Sigmoid colon (tissue), 7 donors: ENCODE measurements at regions of chr19 and their contacts with region 1.

Region 1: GRCh38 chr19:48812094-48812929 is 1.5 kb upstream of the BCAT2 start:
- DNase-seq: peak; percentile 98
- H3K4me3 ChIP-seq: peak overlapping the region; percentile 57 to 64 (median 60)
- H3K27ac ChIP-seq: peak overlapping the region; percentile 89 to 96 (median 90)
- H3K4me1 ChIP-seq: peaks cover 0 to 23% (median 21%) of the 10 kb centered on the region in 4 donors
- H3K27me3 ChIP-seq: no peaks in the 10 kb centered on the region
- CTCF ChIP-seq: no peak
- EP300 ChIP-seq: peak in 3 of 4 donors; percentile 33 to 80 (median 55)
- POLR2A ChIP-seq: peak; percentile 69 to 79

Region 2: GRCh38 chr19:48608798-48609263 is 203.5 kb before region 1 on chr19:
- intact Hi-C with region 1: no loop called
- DNase-seq: no peak
- H3K4me3 ChIP-seq: no peak overlapping the region
- H3K27ac ChIP-seq: no peak overlapping the region
- H3K4me1 ChIP-seq: no peaks in the 10 kb centered on the region
- H3K27me3 ChIP-seq: no peaks in the 10 kb centered on the region
- CTCF ChIP-seq: peak in 2 of 4 experiments; percentile 17 to 39
- EP300 ChIP-seq: no peak
- POLR2A ChIP-seq: no peak

Region 3: DNA sequence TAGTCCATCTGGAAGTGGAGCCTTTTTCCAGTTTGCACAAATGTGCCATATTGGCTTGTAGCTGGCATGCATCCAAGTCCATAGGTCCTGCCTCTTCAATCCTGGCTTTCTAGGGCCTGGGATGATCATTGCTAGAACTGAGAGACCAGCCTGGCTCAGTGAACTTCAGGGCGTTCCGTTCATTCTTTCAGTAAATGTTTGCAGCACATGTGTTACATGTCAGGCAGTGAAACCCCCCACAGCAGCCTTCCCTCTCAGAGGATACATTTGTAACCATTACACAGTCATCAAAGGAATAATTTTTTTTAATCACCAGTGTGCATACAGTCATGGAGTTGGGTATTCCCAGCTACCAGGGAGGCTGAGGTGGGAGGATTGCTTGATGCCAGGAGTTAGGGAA is 106.9 kb before region 1 on chr19:
- intact Hi-C with region 1: no loop called
- DNase-seq: no peak
- H3K4me3 ChIP-seq: no peak overlapping the region
- H3K27ac ChIP-seq: no peak overlapping the region
- H3K4me1 ChIP-seq: no peaks in the 10 kb centered on the region
- H3K27me3 ChIP-seq: no peaks in the 10 kb centered on the region
- CTCF ChIP-seq: no peak
- EP300 ChIP-seq: no peak
- POLR2A ChIP-seq: no peak

Region 4: GRCh38 chr19:48780631-48781391 is 31.5 kb before region 1 on chr19:
- intact Hi-C with region 1: no loop called
- DNase-seq: no peak
- H3K4me3 ChIP-seq: no peak overlapping the region
- H3K27ac ChIP-seq: peak overlapping the region; percentile 40 to 55 (median 46)
- H3K4me1 ChIP-seq: peaks cover 0 to 14% (median 6%) of the 10 kb centered on the region in 4 donors
- H3K27me3 ChIP-seq: no peaks in the 10 kb centered on the region
- CTCF ChIP-seq: no peak
- EP300 ChIP-seq: no peak
- POLR2A ChIP-seq: no peak

Region 5: DNA sequence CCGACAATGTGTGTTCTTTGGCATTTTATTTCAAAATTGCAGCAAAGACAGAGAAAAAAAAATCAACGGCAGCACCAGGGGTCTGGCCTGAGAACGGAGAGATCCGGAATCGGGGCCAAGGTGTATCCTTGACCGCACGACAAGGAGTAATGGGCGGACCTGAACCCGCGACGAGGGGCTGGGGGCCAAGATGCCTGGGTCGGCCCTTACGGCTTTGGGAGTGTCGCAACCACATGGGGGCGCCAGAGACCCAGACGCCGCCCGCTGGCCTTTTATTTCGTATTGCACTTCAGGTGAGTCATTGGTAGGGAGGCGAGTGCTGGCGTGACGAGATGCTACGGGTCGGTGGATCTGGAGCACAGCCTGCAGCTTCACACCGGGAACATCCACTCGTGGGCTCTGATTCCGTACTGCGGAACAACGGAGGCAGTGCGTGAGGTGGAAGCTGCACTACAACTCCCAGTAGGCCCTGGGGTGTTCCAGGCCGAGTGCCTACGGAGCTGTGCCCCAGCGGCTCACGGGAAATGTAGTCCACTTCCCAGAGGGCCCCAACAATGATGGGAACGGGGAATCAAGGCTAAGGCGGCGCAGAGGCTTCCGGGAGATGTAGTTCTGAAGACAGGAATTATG is 17.1 kb before region 1 on chr19:
- intact Hi-C with region 1: loop called (anchors 2 kb)
- DNase-seq: peak; percentile 97
- H3K4me3 ChIP-seq: peak overlapping the region; percentile 8 to 55 (median 47)
- H3K27ac ChIP-seq: peak overlapping the region; percentile 86 to 90 (median 87)
- H3K4me1 ChIP-seq: peaks cover 0 to 21% (median 20%) of the 10 kb centered on the region in 4 donors
- H3K27me3 ChIP-seq: no peaks in the 10 kb centered on the region
- CTCF ChIP-seq: peak; percentile 95 to 97 (median 96)
- EP300 ChIP-seq: peak in 1 of 4 donors; percentile 30
- POLR2A ChIP-seq: no peak